Mammary epithelial cell (primary cell): ENCODE measurements at regions of chr7 and their contacts with region 1.

Region 1: DNA sequence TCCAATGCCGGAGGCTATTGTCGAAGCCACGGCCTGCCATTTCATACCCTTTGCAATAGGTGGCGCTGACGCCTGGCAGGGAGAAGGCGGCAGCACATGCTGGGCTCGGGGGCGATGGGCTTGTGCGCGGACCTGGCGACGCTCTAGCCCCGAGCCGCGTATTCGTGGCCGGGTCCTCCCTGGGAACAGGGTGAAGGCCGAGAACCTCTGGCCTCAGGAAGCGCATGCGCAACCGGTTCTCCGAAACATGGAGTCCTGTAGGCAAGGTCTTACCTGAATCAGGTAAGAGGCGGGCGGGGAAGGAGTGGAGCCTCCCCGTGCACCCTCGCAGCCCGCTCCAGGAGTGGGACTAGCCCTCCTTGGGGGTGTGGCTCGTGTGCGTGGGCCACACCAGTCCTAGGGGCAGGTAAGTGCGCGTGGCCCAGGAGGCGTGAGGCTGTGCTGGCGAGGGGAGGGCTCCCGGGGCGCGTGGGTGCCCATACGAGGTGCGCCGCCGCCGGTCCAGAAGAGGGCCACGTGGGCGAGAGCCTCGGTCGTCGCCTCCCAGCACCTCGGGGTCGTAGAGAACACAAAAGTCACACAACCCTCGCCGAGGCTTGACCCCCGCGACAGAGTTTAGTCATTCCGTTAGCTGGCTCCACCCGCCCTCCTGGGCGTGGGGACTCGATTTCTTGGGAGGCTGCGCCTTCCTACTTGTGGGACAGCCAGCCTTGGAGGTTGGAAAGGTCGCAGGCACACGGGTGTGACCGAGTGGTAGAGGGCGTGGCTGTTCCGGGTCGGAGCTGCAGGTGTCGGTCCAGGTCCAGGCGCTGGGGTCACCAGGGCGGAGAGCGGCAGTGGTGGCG is 5.5 kb upstream of the MEST start:
- DNase-seq: no peak
- H3K4me3 ChIP-seq: peak overlapping the region; percentile 15 to 50 (median 45)
- H3K27ac ChIP-seq: no peak overlapping the region
- H3K4me1 ChIP-seq: peaks cover 15% of the 10 kb centered on the region
- H3K27me3 ChIP-seq: no peaks in the 10 kb centered on the region
- CTCF ChIP-seq: peak; percentile 42 to 59

Region 2: DNA sequence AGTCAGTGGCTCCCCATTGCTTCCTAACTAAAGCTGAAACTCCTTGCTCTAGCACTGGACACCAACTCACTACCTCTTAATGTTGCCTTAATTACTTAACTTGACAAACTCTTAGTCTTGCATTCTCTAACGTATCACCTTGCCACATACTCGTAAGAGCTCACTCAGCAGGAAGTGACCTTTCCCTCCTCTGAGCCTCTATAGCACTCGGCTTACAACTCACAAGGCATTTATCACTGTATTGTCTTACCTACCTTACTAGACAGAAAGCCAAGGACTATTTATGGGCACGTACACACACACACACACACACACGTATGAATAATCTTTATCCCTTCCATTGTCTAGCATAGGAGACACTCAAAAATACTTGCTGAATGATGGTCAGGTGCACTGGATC is 66.7 kb before region 1 on chr7:
- CTCF ChIA-PET with region 1: no interaction called
- dilution Hi-C with region 1: loop called (anchors 5 kb)
- in situ Hi-C with region 1: no loop called
- intact Hi-C with region 1: no loop called
- DNase-seq: peak; percentile 44
- H3K4me3 ChIP-seq: no peak overlapping the region
- H3K27ac ChIP-seq: no peak overlapping the region
- H3K4me1 ChIP-seq: peaks cover 27% of the 10 kb centered on the region
- H3K27me3 ChIP-seq: no peaks in the 10 kb centered on the region
- CTCF ChIP-seq: no peak

Region 3: DNA sequence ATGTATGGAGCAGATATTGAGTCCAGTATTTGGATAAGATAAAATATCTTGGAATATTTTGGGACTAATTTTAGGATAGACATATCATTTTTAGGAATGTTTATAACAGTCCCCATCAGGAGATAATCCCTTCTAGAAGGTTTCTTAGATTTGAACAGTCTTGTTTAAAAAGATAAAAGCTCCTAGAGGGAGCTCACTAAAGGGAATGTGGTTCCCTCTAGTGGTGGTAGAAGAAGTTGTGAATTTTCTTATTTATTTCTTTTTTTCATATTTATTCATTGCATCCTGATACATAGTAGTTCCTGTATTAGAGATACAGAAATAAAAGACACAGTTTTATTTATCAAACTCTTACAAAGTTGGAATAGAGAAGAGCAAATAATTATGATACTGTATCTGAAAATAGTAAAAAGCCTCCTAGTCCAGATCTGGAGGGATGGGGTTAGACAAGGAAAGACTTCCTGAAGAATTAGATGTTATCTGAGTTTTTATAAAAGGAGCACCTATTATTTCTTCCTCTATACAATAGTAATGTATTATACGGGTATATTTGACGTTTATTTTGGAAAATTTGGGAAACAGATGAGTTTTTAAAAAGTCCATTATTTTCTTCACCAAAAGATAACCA is 272.2 kb after region 1 on chr7:
- CTCF ChIA-PET with region 1: no interaction called
- dilution Hi-C with region 1: no loop called
- in situ Hi-C with region 1: no loop called
- intact Hi-C with region 1: no loop called
- DNase-seq: peak; percentile 11
- H3K4me3 ChIP-seq: no peak overlapping the region
- H3K27ac ChIP-seq: no peak overlapping the region
- H3K4me1 ChIP-seq: no peaks in the 10 kb centered on the region
- H3K27me3 ChIP-seq: peaks cover 1% of the 10 kb centered on the region
- CTCF ChIP-seq: peak; percentile 57 to 65